WTC11 (cell line): ENCODE measurements at regions of chr11 and their contacts with region 1.

Region 1: DNA sequence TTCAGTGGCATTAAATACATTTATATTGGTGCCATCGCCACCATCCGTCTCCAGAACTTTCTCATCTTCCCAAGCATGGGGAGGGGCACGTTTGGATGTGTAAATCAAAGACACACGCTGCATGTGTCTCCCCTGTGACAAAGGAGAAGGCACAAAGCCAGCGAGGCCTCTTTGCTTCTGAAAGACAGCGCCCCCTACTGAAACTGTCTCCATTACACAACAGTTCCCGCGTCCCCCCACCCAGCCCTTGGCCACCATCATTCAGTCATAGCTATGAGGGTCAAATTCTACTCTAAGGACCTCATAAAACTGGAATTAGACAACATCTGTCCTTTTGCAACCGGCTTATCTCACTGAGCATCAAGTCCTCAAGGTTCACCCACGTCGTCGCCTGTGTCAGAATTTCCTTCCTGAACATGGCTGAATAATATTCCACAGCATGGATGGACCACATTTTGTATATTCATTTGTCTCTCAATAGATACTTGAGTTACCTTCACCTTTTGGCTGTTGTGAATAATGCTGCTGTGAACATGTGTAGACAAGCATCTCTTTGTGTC is 64.8 kb downstream of the IGF2 start:
- DNase-seq: peak; percentile 60
- ATAC-seq: peak; percentile 84
- H3K4me3 Mint-ChIP-seq: no peak overlapping the region
- H3K27ac Mint-ChIP-seq: no peak overlapping the region
- H3K4me1 Mint-ChIP-seq: no peaks in the 10 kb centered on the region
- H3K27me3 Mint-ChIP-seq: peaks cover 20% of the 10 kb centered on the region
- CTCF ChIP-seq: peak; percentile 78

Region 2: GRCh38 chr11:1863352-1864216 is 210.8 kb before region 1 on chr11:
- CTCF ChIA-PET with region 1: no interaction called
- POLR2A ChIA-PET with region 1: no interaction called
- DNase-seq: peak; percentile 40
- ATAC-seq: peak; percentile 74
- H3K4me3 Mint-ChIP-seq: no peak overlapping the region
- H3K27ac Mint-ChIP-seq: no peak overlapping the region
- H3K4me1 Mint-ChIP-seq: no peaks in the 10 kb centered on the region; the same call in 1 of the 2 replicates
- H3K27me3 Mint-ChIP-seq: no peaks in the 10 kb centered on the region
- CTCF ChIP-seq: no peak

Region 3: DNA sequence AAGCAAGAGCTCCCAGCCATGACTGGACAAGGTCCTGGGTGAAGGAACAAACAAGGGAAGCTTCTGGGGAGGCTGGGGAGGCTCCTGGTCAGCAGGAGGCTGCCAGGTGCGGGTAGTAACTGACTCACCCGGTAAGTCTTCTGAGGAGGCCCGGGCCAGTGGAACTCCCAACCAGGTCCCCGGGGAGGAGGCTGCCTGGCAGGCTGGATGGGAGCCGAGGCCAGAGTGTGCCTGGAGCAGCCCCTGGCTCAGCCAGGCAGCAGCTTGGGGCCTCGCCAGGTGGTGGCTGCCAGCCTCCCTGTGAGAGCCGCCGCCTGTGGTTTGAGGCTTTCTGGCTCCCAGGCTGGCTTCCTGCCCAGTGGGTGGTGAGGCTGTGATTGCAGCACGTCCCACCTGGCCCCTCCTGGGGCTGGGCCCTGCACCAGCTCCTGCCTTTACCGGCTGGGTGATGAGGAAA is 18.6 kb after region 1 on chr11:
- CTCF ChIA-PET with region 1: interaction called, 21 read pairs
- POLR2A ChIA-PET with region 1: no interaction called
- DNase-seq: no peak
- ATAC-seq: no peak
- H3K4me3 Mint-ChIP-seq: no peak overlapping the region
- H3K27ac Mint-ChIP-seq: no peak overlapping the region
- H3K4me1 Mint-ChIP-seq: peaks cover 12% of the 10 kb centered on the region
- H3K27me3 Mint-ChIP-seq: peaks cover 4% of the 10 kb centered on the region
- CTCF ChIP-seq: no peak

Region 4: DNA sequence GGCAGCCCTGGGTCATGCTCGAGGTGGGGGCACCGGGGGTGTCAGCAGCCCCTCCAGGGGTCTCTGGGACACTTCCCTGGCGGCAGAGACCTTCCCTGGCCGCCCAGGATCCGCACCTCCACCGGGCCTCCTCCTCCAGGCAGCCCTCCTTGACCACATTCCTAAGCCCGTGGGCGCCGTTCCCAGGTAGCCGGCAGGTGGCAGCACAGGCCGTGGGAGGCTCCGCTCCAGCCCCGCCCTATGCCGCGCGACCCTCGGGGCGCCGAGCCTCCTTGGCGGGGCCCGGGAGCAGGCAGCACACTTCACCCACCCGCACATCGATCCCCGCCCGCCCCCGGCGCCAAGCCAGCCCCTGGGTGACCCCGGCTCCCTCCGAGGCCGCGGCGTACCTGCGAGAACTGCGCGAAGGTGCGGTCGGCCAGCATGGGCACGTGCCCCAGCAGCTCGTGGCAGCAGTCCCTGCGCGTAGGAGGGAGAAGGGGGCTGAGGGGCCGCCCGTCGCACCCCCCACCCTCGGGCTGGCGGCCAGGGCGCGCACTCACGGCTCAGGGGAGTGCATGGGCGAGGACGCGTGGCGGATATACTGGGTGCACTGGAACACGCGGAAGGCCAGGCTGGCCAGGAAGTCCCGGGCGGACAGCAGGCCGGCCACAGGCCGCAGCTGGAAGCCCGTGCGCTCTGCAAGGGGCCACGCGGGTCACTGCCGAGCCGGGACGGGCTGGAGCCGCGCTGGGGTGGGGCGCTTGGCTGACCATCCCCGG is 91.9 kb after region 1 on chr11:
- CTCF ChIA-PET with region 1: no interaction called
- POLR2A ChIA-PET with region 1: no interaction called
- DNase-seq: peak; percentile 75
- ATAC-seq: peak; percentile 76
- H3K4me3 Mint-ChIP-seq: no peak overlapping the region
- H3K27ac Mint-ChIP-seq: no peak overlapping the region
- H3K4me1 Mint-ChIP-seq: no peaks in the 10 kb centered on the region
- H3K27me3 Mint-ChIP-seq: no peaks in the 10 kb centered on the region
- CTCF ChIP-seq: no peak; the same call in 1 of the 2 replicates

Region 5: DNA sequence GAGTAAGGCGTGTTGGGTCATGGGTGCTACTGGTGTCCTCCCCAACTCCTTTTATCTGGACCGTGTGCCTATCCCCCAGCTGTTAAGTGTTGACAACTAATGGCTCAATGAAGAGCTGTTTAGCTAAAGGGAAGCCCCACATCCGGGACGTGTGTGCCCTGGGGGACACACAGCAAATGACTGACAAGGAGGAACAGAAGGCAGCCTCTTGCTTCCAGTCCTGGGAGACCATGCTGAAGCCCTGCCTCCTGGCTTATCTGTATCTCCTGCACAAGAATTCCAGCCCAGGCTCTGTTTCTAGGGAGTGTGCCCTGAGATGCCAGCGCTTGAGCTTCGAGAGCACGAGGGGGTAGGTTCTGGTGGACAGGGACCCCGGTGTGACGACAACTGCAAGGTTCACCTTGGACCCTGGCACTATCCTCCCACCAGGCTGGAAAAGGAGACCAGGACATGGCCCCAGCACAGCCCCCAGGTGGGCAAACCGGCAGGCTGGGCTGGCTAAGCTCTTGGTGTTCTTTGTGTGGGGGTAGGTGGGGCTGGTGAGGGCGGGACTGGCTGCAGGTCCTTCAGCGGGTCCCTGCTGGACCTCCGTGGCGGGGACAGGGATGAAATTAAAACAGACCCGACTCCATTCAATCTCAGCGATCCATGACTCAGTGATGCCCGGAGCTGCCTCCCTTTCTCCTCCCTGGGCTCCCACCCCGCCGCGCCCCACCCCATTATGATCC is 175.0 kb after region 1 on chr11:
- CTCF ChIA-PET with region 1: no interaction called
- POLR2A ChIA-PET with region 1: no interaction called
- DNase-seq: no peak
- ATAC-seq: no peak
- H3K4me3 Mint-ChIP-seq: no peak overlapping the region
- H3K27ac Mint-ChIP-seq: no peak overlapping the region
- H3K4me1 Mint-ChIP-seq: no peaks in the 10 kb centered on the region
- H3K27me3 Mint-ChIP-seq: peaks cover 38% of the 10 kb centered on the region
- CTCF ChIP-seq: no peak